ENCODE measurements at regions of chr6 and their contacts with region 1.

Region 1: GRCh38 chr6:116279260-116280063 is at the start of gene TSPYL1:
- DNase-seq: peak; percentile 88 to 99 (median 94)
- ATAC-seq: peak; percentile 82
- H3K4me3 ChIP-seq: peak within 1 kb of the TSS; percentile 79 to 98
- H3K4me3 Mint-ChIP-seq: peak within 1 kb of the TSS; percentile 97
- H3K27ac ChIP-seq: peak within 1 kb of the TSS; percentile 97 to 100
- H3K27ac Mint-ChIP-seq: peak within 1 kb of the TSS; percentile 99
- H3K4me1 ChIP-seq: peaks cover 55% of the 10 kb centered on the region
- H3K4me1 Mint-ChIP-seq: peaks cover 62% of the 10 kb centered on the region
- H3K27me3 ChIP-seq: no peaks in the 10 kb centered on the region
- H3K27me3 Mint-ChIP-seq: no peaks in the 10 kb centered on the region
- CTCF ChIP-seq: no peak
- total RNA-seq, gene TSPYL1: 247 to 248 TPM

Region 2: DNA sequence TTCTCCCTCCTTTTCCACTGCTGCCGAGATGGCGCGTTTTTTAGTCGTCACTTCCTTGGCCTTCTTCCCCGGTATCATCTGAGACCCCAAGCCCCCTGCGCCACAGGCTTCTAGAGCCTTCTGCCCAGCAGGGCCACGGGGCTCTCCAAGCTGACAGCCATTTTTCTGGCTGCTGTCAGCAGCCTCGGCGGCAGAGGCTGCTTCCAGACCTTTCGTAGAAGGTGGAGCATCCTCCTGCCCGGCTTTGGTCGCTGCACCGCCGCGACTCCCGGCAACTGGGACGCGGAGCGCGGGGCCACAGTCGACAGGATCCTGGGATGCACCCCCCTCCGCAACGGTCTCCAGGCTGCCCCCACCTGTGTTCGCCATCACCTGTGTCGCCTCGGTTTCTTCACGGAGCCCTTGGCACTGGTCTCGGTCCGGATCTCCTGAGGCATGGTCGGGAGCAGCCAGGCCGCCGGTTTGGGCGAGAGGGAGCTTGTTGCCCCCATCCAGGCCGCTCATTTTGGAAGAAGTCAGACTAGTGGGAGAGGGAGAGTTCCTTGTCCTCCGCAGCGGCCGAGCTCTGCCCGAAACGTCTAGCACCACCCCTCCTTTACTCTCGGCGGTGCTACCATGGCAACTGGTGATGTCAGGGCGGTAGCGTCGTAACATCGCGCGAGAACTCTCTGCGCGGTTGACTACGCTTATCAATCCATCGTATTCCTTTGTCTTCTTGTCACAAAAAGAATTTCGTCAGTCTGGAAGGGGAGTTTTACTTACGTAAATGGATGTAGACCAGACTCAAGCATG is 25.8 kb before region 1 on chr6 and contains the start of gene TSPYL4:
- CTCF ChIA-PET with region 1: no interaction called
- POLR2A ChIA-PET with region 1: interaction called, 52 read pairs
- intact Hi-C with region 1: loop called (anchors 1 kb)
- DNase-seq: peak; percentile 83 to 98 (median 91)
- ATAC-seq: peak; percentile 94
- H3K4me3 ChIP-seq: peak within 1 kb of the TSS; percentile 89 to 91
- H3K4me3 Mint-ChIP-seq: no peak within 1 kb of the TSS
- H3K27ac ChIP-seq: peak within 1 kb of the TSS; percentile 95 to 98
- H3K27ac Mint-ChIP-seq: no peak within 1 kb of the TSS
- H3K4me1 ChIP-seq: peaks cover 37% of the 10 kb centered on the region
- H3K4me1 Mint-ChIP-seq: peaks cover 26% of the 10 kb centered on the region
- H3K27me3 ChIP-seq: no peaks in the 10 kb centered on the region
- H3K27me3 Mint-ChIP-seq: no peaks in the 10 kb centered on the region
- CTCF ChIP-seq: no peak
- total RNA-seq, gene TSPYL4: 51.0 to 51.6 TPM

Region 3: GRCh38 chr6:116268589-116269293 is 10.7 kb before region 1 on chr6:
- CTCF ChIA-PET with region 1: interaction called, 11 read pairs
- POLR2A ChIA-PET with region 1: interaction called, 36 read pairs
- intact Hi-C with region 1: loop called in 1 of 2 experiments (anchors 1 kb)
- DNase-seq: peak in 2 of 9 experiments; percentile 69 to 79
- ATAC-seq: peak; percentile 82
- H3K4me3 ChIP-seq: no peak overlapping the region
- H3K4me3 Mint-ChIP-seq: no peak overlapping the region
- H3K27ac ChIP-seq: no peak overlapping the region
- H3K27ac Mint-ChIP-seq: peak overlapping the region; percentile 9
- H3K4me1 ChIP-seq: peaks cover 17% of the 10 kb centered on the region
- H3K4me1 Mint-ChIP-seq: peaks cover 42% of the 10 kb centered on the region
- H3K27me3 ChIP-seq: no peaks in the 10 kb centered on the region
- H3K27me3 Mint-ChIP-seq: no peaks in the 10 kb centered on the region
- CTCF ChIP-seq: peak; percentile 82

Region 4: GRCh38 chr6:116335612-116336215 is 56.3 kb after region 1 on chr6:
- CTCF ChIA-PET with region 1: no interaction called
- POLR2A ChIA-PET with region 1: no interaction called
- intact Hi-C with region 1: no loop called
- DNase-seq: no peak
- ATAC-seq: no peak
- H3K4me3 ChIP-seq: no peak overlapping the region
- H3K4me3 Mint-ChIP-seq: no peak overlapping the region
- H3K27ac ChIP-seq: no peak overlapping the region
- H3K27ac Mint-ChIP-seq: no peak overlapping the region
- H3K4me1 ChIP-seq: no peaks in the 10 kb centered on the region
- H3K4me1 Mint-ChIP-seq: no peaks in the 10 kb centered on the region
- H3K27me3 ChIP-seq: no peaks in the 10 kb centered on the region
- H3K27me3 Mint-ChIP-seq: no peaks in the 10 kb centered on the region
- CTCF ChIP-seq: no peak

Region 5: DNA sequence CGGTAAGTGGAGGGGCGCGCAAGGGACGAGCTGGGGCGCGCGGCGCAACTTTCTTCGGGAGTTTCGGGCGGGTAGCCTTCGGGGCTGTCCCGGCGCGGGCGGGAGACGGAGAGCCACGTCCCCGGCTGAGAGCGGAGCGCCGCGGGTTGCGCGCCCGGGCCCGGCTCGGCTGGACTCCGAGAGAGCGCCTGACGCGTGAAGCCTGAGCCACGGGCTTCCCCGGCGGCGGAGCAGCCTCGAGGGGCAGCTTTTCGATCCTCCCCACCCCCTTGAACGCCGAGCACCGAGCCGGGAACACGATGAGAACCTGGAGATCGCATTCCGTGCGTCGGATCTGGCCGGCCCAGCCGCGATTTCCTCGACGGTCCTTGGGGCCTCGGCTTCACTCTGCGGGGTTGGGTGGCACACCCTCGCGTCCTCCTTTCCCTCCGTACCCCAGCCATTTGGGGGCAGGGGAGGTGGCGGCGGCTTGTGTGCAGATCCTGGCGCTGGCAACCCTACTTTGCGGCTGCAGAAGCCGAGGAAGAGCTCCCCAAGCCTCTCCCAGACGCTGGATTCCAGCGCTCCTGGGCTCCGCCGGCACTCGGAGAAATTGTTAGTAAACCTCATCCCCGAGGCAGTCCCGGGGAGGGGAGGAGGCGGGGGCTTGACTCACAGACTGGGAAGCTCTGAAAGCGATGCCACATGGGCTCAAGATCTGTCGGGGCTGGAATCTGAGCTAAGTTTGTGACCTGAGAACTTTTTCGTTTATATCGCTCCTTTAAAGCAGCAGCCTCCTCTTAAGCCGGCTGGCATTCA is 91.9 kb after region 1 on chr6:
- CTCF ChIA-PET with region 1: no interaction called
- POLR2A ChIA-PET with region 1: interaction called, 3 read pairs
- intact Hi-C with region 1: loop called in 1 of 2 experiments (anchors 10 kb)
- DNase-seq: peak in 6 of 9 experiments; percentile 15 to 54 (median 40)
- ATAC-seq: peak; percentile 41
- H3K4me3 ChIP-seq: peak overlapping the region; percentile 58 to 64
- H3K4me3 Mint-ChIP-seq: peak overlapping the region; percentile 89
- H3K27ac ChIP-seq: no peak overlapping the region
- H3K27ac Mint-ChIP-seq: peak overlapping the region; percentile 42
- H3K4me1 ChIP-seq: peaks cover 16% of the 10 kb centered on the region
- H3K4me1 Mint-ChIP-seq: peaks cover 17% of the 10 kb centered on the region
- H3K27me3 ChIP-seq: no peaks in the 10 kb centered on the region
- H3K27me3 Mint-ChIP-seq: peaks cover 24% of the 10 kb centered on the region
- CTCF ChIP-seq: no peak

Region 6: DNA sequence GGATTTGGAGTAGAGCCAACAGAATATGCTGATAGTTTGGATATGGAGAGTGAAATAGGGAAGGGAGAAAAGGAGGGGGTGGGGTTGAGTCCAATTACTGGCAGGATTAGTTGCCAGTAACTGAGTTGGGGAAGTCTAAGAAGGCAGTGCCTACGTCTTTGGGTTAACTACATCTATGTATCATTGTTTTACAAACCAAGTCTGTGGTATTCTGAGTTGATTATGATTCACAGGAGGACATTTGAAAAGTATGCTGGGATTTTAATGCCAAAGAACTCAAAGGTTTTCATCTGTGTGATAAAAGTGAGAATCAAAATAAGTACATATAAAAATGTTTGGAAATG is 106.0 kb after region 1 on chr6:
- CTCF ChIA-PET with region 1: no interaction called
- POLR2A ChIA-PET with region 1: no interaction called
- intact Hi-C with region 1: no loop called
- DNase-seq: peak in 1 of 9 experiments; percentile 12
- ATAC-seq: no peak
- H3K4me3 ChIP-seq: no peak overlapping the region
- H3K4me3 Mint-ChIP-seq: no peak overlapping the region
- H3K27ac ChIP-seq: no peak overlapping the region
- H3K27ac Mint-ChIP-seq: no peak overlapping the region
- H3K4me1 ChIP-seq: no peaks in the 10 kb centered on the region
- H3K4me1 Mint-ChIP-seq: peaks cover 9% of the 10 kb centered on the region
- H3K27me3 ChIP-seq: no peaks in the 10 kb centered on the region
- H3K27me3 Mint-ChIP-seq: peaks cover 3% of the 10 kb centered on the region
- CTCF ChIP-seq: no peak

Region 7: GRCh38 chr6:116667623-116668022 is 388.2 kb after region 1 on chr6:
- CTCF ChIA-PET with region 1: no interaction called
- POLR2A ChIA-PET with region 1: no interaction called
- intact Hi-C with region 1: loop called (anchors 1 to 5 kb)
- DNase-seq: no peak
- ATAC-seq: no peak
- H3K4me3 ChIP-seq: peak overlapping the region; percentile 71 to 83
- H3K4me3 Mint-ChIP-seq: peak overlapping the region; percentile 99
- H3K27ac ChIP-seq: peak overlapping the region; percentile 70 to 84
- H3K27ac Mint-ChIP-seq: no peak overlapping the region
- H3K4me1 ChIP-seq: peaks cover 33% of the 10 kb centered on the region
- H3K4me1 Mint-ChIP-seq: peaks cover 44% of the 10 kb centered on the region
- H3K27me3 ChIP-seq: no peaks in the 10 kb centered on the region
- H3K27me3 Mint-ChIP-seq: no peaks in the 10 kb centered on the region
- CTCF ChIP-seq: no peak

Region 8: GRCh38 chr6:116680975-116681808 is 401.7 kb after region 1 on chr6 and contains the start of gene KPNA5:
- CTCF ChIA-PET with region 1: no interaction called
- POLR2A ChIA-PET with region 1: interaction called, 8 read pairs
- intact Hi-C with region 1: loop called (anchors 1 to 5 kb)
- DNase-seq: peak; percentile 85 to 96 (median 92)
- ATAC-seq: peak; percentile 93
- H3K4me3 ChIP-seq: peak within 1 kb of the TSS; percentile 95 to 97
- H3K4me3 Mint-ChIP-seq: peak within 1 kb of the TSS; percentile 96
- H3K27ac ChIP-seq: peak within 1 kb of the TSS; percentile 93 to 94
- H3K27ac Mint-ChIP-seq: peak within 1 kb of the TSS; percentile 99
- H3K4me1 ChIP-seq: peaks cover 17% of the 10 kb centered on the region
- H3K4me1 Mint-ChIP-seq: peaks cover 50% of the 10 kb centered on the region
- H3K27me3 ChIP-seq: no peaks in the 10 kb centered on the region
- H3K27me3 Mint-ChIP-seq: no peaks in the 10 kb centered on the region
- CTCF ChIP-seq: no peak
- total RNA-seq, gene KPNA5: 56.3 to 57.4 TPM

Measured in CD8-positive, alpha-beta T cell (primary cell).